ENCODE measurements at regions of chr14 and their contacts with region 1.

Region 1: GRCh38 chr14:64914237-64914971 is at the start of gene CHURC1:
- DNase-seq: peak; percentile 97
- ATAC-seq: peak; percentile 98
- H3K4me3 Mint-ChIP-seq: peak within 1 kb of the TSS; percentile 87
- H3K27ac Mint-ChIP-seq: peak within 1 kb of the TSS; percentile 93
- H3K4me1 Mint-ChIP-seq: peaks cover 41% of the 10 kb centered on the region
- H3K27me3 Mint-ChIP-seq: peaks cover 7% of the 10 kb centered on the region
- total RNA-seq, gene CHURC1: 62.4 to 72.2 TPM

Region 2: GRCh38 chr14:64928239-64929013 is 14.0 kb after region 1 on chr14:
- CTCF ChIA-PET with region 1: interaction called, 15 read pairs
- POLR2A ChIA-PET with region 1: interaction called, 12 read pairs
- DNase-seq: no peak
- ATAC-seq: peak; percentile 82
- H3K4me3 Mint-ChIP-seq: no peak overlapping the region
- H3K27ac Mint-ChIP-seq: no peak overlapping the region
- H3K4me1 Mint-ChIP-seq: peaks cover 20% of the 10 kb centered on the region
- H3K27me3 Mint-ChIP-seq: no peaks in the 10 kb centered on the region

Region 3: DNA sequence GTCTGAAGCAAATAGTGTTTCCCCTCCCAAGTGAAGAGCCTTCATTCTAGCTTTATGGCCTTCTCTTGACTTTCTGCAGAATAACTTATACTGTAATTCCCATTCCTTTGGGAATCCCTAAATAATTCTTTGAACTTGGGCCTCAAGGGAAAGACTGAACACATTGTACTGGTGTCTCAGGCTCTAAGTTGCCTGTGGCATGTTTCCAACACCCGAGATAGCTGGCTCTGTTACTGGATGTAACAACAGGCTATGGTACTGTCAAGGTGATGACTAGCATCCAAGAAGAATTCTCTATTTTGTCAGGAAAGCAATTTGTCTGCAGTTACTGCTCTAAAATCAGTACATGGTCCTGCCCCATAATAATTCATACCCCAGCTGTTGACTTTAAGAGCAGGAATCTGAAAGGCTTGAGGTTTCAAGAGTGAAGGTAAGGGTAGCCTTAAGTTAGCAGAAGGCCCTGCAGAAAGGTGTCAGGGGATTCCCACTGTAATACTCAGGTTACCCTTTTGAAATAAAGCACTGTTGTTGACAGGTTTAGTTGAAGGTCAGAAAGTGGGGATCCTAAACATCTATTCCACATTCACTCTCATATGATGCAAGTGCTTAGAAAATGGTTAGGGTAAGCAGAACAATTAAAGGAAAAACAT is 22.9 kb after region 1 on chr14:
- CTCF ChIA-PET with region 1: interaction called, 5 read pairs
- POLR2A ChIA-PET with region 1: interaction called, 13 read pairs
- DNase-seq: no peak
- ATAC-seq: no peak
- H3K4me3 Mint-ChIP-seq: no peak overlapping the region
- H3K27ac Mint-ChIP-seq: no peak overlapping the region
- H3K4me1 Mint-ChIP-seq: peaks cover 26% of the 10 kb centered on the region
- H3K27me3 Mint-ChIP-seq: no peaks in the 10 kb centered on the region